CD4-positive, alpha-beta memory T cell (primary cell): ENCODE measurements at regions of chr1 and their contacts with region 1.

Region 1: DNA sequence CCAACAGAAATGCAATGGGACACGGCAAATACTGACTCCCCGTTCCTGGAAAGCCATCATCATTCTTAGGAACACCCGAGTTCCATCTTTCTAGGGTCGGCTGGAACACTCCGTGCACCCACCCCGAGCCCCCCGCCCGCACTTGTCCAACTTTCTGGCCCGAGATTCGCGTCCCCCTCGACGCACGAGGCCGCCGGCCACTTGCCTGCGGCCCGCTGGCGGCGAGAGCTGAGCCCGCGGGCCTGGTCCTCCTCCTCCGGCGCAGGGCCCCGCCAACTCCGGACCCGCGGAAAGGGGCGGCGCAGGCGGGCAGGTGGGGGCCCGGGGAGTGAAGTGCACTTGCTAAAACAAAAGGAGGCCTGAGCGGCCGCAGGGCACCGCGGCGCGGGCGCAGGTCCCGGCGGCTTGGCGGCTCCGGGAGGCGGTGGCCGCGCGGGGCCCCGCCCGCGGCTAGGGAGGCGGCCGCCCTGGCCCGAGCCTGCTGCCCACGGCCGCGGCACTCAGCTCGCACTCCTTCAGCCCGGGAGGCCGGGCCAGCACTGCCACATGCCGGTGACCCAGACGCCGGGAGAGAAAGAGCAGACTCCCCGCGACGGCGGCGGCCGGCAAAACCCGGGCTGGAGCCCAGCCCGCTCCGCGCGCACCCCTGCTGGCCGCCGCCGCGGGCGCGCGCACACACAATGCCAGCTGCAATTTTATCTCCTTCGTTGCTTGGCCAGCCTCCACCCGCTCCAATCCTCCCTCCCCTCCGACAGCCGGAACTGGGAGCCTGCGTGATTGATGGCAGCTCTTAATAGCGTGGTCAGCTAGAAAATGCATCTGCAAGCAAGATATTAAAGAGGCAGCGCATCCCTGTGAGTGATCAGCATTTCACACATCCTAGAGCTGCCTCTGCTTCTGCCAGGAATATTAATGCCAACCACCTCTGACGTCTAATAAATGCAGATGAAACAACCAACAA is 114.3 kb downstream of the RERE start:
- DNase-seq: peak; percentile 31 to 56 (median 44)
- H3K4me3 ChIP-seq: peak overlapping the region in 1 of 2 donors; percentile 36
- H3K4me3 Mint-ChIP-seq: peak overlapping the region; percentile 81 to 91 (median 86)
- H3K27ac ChIP-seq: no peak overlapping the region
- H3K27ac Mint-ChIP-seq: peak overlapping the region; percentile 9 to 86 (median 58)
- H3K4me1 ChIP-seq: peaks cover 32% of the 10 kb centered on the region
- H3K4me1 Mint-ChIP-seq: peaks cover 15 to 30% (median 26%) of the 10 kb centered on the region in 4 donors
- H3K27me3 ChIP-seq: peaks cover 23% of the 10 kb centered on the region
- H3K27me3 Mint-ChIP-seq: peaks cover 25 to 26% of the 10 kb centered on the region in 2 donors

Region 2: GRCh38 chr1:8687039-8687438 is 16.1 kb before region 1 on chr1:
- CTCF ChIA-PET with region 1: no interaction called
- POLR2A ChIA-PET with region 1: no interaction called
- intact Hi-C with region 1: no loop called
- DNase-seq: no peak
- H3K4me3 ChIP-seq: no peak overlapping the region
- H3K4me3 Mint-ChIP-seq: no peak overlapping the region
- H3K27ac ChIP-seq: no peak overlapping the region
- H3K27ac Mint-ChIP-seq: no peak overlapping the region
- H3K4me1 ChIP-seq: no peaks in the 10 kb centered on the region
- H3K4me1 Mint-ChIP-seq: peaks cover 4 to 8% (median 6%) of the 10 kb centered on the region in 4 donors
- H3K27me3 ChIP-seq: no peaks in the 10 kb centered on the region
- H3K27me3 Mint-ChIP-seq: no peaks in the 10 kb centered on the region

Region 3: GRCh38 chr1:8817406-8818324 is 114.5 kb after region 1 on chr1 and contains the start of gene RERE:
- CTCF ChIA-PET with region 1: interaction called, 3 read pairs
- POLR2A ChIA-PET with region 1: interaction called, 4 read pairs
- intact Hi-C with region 1: loop called (anchors 10 kb)
- DNase-seq: peak; percentile 93 to 100 (median 98)
- H3K4me3 ChIP-seq: peak within 1 kb of the TSS; percentile 79 to 80
- H3K4me3 Mint-ChIP-seq: peak within 1 kb of the TSS; percentile 86 to 97 (median 94)
- H3K27ac ChIP-seq: peak within 1 kb of the TSS; percentile 81
- H3K27ac Mint-ChIP-seq: peak within 1 kb of the TSS; percentile 91 to 99 (median 98)
- H3K4me1 ChIP-seq: peaks cover 28% of the 10 kb centered on the region
- H3K4me1 Mint-ChIP-seq: peaks cover 24 to 40% (median 29%) of the 10 kb centered on the region in 4 donors
- H3K27me3 ChIP-seq: no peaks in the 10 kb centered on the region
- H3K27me3 Mint-ChIP-seq: peaks cover 2 to 3% of the 10 kb centered on the region in 2 donors
- total RNA-seq, gene RERE: 104 to 117 TPM